HepG2 (cell line): ENCODE measurements at regions of chr16 and their contacts with region 1.

Region 1: DNA sequence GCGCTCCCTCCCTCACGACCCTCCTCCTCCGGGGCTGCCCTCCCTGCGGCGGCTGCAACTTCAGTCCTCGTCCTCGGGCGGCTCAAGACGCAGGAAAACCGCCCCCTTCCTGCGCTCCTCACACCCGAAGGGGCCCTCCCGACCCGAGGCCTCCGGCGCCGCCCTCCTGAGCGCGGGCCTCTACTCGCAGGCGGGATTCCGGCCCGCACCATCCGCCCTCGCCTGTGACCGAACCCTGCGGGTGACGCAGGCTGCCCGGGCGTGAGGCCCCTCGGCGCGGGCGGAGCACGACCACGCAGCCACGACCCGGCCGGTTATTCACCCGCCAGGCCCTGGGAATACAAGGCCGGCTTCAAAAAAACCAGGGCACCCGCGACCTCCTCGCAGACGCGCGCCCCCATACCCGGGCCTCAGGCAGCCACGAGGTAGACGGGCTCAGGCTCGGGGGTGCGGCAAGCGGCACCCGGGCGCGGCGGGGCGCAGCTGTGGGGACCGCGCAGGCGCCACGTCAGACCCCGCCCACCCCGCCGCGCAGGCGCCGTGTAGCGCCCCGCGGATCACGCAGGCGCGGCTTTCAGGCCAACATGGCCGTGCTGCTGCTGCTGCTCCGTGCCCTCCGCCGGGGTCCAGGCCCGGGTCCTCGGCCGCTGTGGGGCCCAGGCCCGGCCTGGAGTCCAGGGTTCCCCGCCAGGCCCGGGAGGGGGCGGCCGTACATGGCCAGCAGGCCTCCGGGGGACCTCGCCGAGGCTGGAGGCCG is at the start of gene SPG7:
- DNase-seq: peak; percentile 75
- ATAC-seq: peak; percentile 70
- H3K4me3 ChIP-seq: peak within 1 kb of the TSS; percentile 75 to 93 (median 83)
- H3K27ac ChIP-seq: peak within 1 kb of the TSS; percentile 88
- H3K4me1 ChIP-seq: peaks cover 57% of the 10 kb centered on the region
- H3K27me3 ChIP-seq: no peaks in the 10 kb centered on the region; a peak in 1 of 5 replicates
- CTCF ChIP-seq: peak; percentile 28; the same call in 1 of the 2 replicates
- EP300 ChIP-seq: 0 out of 4 replicates have a peak, but pooled peaks of 1 of the 2 experiments have one; percentile 18
- POLR2A ChIP-seq: peak; percentile 65 to 94
- RAD21 ChIP-seq: peak; percentile 64
- total RNA-seq, gene SPG7: 63.9 and 136 TPM in 2 replicates

Region 2: DNA sequence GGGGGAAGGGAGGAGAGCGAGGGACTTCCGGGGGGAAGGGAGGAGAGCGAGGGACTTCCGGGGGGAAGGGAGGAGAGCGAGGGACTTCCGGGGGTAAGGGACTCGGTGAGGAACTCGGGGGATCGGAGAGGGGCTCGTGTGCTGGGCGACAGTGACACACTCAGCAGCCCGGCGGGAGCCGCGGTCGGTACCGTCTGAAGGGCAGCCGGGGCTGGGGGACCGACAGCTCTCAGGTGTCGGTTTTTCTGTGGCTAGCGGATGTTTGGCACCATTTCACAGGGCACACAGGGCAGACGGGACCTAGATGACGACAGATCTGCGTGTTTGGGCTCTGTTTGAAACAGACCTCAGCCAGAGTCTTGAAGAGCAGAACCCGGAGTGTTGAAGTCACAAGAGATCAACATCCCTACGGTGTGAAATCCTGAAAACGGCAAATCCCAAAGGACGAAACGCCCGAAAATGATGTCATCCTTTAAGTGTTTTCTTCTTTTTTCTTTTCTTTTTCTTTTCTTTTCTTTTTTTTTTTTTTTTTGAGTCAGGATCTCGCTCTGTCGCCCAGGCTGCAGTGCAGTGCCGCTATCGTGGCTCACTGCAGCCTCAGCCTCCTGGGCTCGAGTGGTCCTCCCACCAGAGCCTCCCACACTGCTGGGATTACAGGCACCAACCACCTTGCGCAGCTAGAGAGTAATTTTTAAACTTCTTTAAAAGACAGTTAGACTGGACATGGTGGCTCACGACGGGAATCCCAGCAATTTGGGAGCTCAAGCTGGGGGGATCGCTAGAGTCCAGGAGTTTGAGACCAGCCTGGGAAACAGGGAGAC is 266.6 kb before region 1 on chr16:
- CTCF ChIA-PET with region 1: no interaction called
- POLR2A ChIA-PET with region 1: interaction called, 9 read pairs
- in situ Hi-C with region 1: no loop called
- intact Hi-C with region 1: loop called (anchors 5 kb)
- DNase-seq: peak; percentile 82
- ATAC-seq: peak; percentile 89
- H3K4me3 ChIP-seq: peak overlapping the region; percentile 66 to 99 (median 90)
- H3K27ac ChIP-seq: peak overlapping the region; percentile 96
- H3K4me1 ChIP-seq: peaks cover 41% of the 10 kb centered on the region
- H3K27me3 ChIP-seq: no peaks in the 10 kb centered on the region; a peak in 1 of 5 replicates
- CTCF ChIP-seq: no peak
- EP300 ChIP-seq: no peak
- POLR2A ChIP-seq: peak; percentile 98
- RAD21 ChIP-seq: peak; percentile 4; the same call in 1 of the 2 replicates

Region 3: DNA sequence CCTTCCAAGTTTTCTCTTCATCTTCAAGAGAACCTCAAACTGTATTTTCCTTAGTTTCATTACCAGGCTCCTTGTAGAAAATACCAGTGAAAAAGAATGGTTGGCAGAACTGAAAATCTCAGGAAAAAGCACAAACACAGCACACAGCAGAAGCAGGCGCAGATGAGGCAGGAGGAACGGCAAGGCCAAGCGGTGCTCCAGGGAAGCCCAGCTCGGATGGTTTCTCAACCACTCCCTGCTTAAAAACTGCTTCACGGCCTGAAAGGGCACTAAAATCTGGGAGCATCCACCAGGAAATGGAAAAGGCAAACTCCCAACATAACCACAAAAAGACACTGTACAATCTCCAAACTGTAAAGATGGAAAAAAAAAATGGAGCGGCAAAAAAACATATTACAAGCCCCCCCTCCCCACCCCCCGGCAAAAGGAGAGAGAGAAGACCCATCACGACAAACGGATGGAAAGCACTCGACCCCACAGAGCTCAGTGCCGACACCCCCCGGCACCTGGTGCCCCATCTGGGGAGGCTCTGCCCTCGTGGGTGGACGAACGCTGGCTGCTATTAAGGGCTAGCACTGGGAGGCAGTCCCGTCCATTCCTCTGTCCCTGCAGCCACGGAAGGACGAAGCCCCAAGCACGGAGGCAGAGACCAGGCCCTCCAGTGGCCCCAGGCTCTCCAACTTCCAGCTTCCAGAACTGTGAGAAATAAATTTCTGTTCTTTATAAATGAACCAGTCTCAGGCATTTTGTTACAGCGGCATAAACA is 163.0 kb before region 1 on chr16:
- CTCF ChIA-PET with region 1: no interaction called
- POLR2A ChIA-PET with region 1: interaction called, 10 read pairs
- in situ Hi-C with region 1: no loop called
- intact Hi-C with region 1: no loop called
- DNase-seq: no peak
- ATAC-seq: peak; percentile 62
- H3K4me3 ChIP-seq: no peak overlapping the region; a peak in 1 of 6 replicates
- H3K27ac ChIP-seq: peak overlapping the region; percentile 50
- H3K4me1 ChIP-seq: peaks cover 55% of the 10 kb centered on the region
- H3K27me3 ChIP-seq: no peaks in the 10 kb centered on the region
- CTCF ChIP-seq: no peak
- EP300 ChIP-seq: no peak
- POLR2A ChIP-seq: no peak
- RAD21 ChIP-seq: no peak

Region 4: DNA sequence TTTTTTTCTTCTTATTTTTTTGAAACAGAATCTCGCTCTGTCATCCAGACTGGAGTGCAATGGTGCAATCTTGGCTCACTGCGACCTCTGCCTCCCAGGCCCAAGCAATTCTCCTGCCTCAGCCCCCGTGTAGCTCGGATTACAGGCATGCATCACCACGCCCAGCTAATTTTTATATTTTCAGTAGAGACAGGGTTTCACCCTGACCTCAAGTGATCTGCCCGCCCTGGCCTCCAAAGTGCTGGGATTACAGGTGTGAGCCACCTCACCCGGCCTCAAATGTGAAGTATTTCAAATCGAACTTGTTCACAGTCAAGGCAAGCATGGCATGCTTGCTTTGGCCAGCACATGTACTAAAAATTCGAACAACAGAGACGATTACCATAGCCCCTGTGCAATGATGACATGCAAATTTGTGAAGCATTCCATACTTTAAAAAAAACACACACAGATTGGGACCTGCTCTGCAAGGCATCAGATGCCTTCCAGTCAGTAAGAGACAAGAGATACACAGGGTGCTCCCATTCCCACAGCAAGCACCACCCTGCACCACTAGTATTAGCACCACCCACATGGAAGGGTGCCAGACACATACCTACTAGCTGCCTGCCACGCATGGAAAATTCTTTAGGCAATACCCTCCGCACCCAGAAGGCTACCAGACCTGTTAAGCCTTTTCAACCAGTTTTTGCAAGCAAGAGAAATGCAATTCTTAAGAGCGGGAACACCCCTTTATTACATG is 64.9 kb before region 1 on chr16:
- CTCF ChIA-PET with region 1: no interaction called
- POLR2A ChIA-PET with region 1: interaction called, 12 read pairs
- in situ Hi-C with region 1: no loop called
- intact Hi-C with region 1: loop called (anchors 5 kb)
- DNase-seq: peak; percentile 89
- ATAC-seq: peak; percentile 77
- H3K4me3 ChIP-seq: peak overlapping the region in 2 of 3 experiments; percentile 1 to 20; a peak in 3 of 6 replicates
- H3K27ac ChIP-seq: peak overlapping the region; percentile 63
- H3K4me1 ChIP-seq: peaks cover 89% of the 10 kb centered on the region
- H3K27me3 ChIP-seq: no peaks in the 10 kb centered on the region
- CTCF ChIP-seq: peak; percentile 53
- EP300 ChIP-seq: no peak
- POLR2A ChIP-seq: no peak
- RAD21 ChIP-seq: no peak

Region 5: DNA sequence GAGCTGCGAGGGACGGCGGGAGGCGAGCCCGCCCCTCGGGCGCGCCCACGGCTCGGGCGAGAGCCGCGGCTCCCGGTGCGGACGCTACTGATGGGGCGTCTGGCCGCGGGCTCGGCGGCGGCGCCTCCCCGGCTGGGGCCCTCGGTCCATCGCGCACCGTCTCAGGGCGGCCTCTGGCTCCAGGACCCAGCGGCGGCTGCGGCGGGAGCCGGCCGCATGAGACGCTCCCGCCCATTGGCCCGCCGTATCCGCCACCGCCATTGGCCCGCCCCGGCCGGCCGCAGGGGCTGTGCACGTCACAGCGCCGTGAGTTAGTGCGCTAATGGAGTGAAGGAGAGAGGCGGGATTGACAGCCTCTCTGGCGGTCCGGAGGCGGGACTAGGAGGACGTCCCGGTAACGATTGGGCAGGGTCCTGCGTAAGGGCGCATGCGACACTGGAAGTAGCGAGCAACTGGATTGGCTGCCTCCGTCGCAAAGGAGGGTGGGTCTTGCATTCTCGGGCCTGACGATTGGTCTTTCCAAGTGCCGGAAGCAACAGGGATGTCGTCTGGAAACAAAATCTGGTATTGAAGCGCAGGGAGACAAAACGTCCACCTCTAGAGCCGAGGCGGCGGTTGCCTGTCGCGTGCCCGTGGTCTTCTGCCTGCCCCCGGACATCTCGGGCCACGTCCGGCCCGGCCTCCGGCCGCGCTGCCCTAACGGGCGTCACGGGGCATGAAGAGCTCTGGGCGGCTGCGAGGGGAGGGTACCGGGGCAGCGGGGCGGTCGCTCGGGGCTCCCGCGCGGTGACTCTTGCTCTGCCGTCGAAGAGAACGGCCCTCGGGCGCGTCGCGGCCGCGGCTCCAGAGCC is 17.4 kb before region 1 on chr16 and contains the start of gene ANKRD11:
- CTCF ChIA-PET with region 1: no interaction called
- POLR2A ChIA-PET with region 1: interaction called, 23 read pairs
- in situ Hi-C with region 1: no loop called
- intact Hi-C with region 1: loop called (anchors 2 kb)
- DNase-seq: peak; percentile 100
- ATAC-seq: peak; percentile 93
- H3K4me3 ChIP-seq: peak within 1 kb of the TSS; percentile 61 to 93 (median 85)
- H3K27ac ChIP-seq: peak within 1 kb of the TSS; percentile 81
- H3K4me1 ChIP-seq: peaks cover 59% of the 10 kb centered on the region
- H3K27me3 ChIP-seq: no peaks in the 10 kb centered on the region; a peak in 1 of 5 replicates
- CTCF ChIP-seq: no peak; the same call in 1 of the 2 replicates
- EP300 ChIP-seq: no peak
- POLR2A ChIP-seq: peak; percentile 91 to 93
- RAD21 ChIP-seq: peak; percentile 88
- total RNA-seq, gene ANKRD11: 21.4 and 24.4 TPM in 2 replicates

Region 6: DNA sequence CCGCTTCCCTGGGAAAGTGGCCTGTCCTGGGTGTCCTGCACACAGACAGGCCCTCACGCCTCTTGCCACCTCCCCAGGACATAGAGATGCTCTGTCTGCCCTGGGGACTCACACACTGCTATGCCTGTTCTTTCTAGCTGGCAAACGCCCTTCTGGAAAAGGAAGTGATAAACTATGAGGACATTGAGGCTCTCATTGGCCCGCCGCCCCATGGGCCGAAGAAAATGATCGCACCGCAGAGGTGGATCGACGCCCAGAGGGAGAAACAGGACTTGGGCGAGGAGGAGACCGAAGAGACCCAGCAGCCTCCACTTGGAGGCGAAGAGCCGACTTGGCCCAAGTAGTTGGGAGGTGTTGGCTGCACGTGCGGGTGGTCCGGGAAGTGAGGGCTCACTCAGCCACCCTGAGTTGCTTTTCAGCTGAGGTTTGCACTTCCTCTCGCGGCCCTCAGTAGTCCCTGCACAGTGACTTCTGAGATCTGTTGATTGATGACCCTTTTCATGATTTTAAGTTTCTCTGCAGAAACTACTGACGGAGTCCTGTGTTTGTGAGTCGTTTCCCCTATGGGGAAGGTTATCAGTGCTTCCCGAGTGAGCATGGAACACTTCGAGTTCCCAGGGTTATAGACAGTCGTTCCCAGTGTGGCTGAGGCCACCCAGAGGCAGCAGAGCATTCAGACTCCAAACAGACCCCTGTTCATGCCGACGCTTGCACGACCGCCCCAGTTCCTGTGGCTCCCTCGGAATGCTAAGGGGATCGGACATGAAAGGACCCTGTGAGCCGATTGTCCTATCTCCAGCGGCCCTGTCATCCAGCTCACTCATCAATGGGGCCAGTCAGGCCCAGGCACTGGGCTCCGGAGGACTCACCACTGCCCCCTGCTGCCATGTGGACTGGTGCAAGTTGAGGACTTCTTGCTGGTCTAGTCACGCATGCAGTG is 49.0 kb after region 1 on chr16:
- CTCF ChIA-PET with region 1: no interaction called
- POLR2A ChIA-PET with region 1: interaction called, 4 read pairs
- in situ Hi-C with region 1: no loop called
- intact Hi-C with region 1: loop called (anchors 5 kb)
- DNase-seq: peak; percentile 90
- ATAC-seq: peak; percentile 79
- H3K4me3 ChIP-seq: no peak overlapping the region
- H3K27ac ChIP-seq: peak overlapping the region; percentile 49
- H3K4me1 ChIP-seq: peaks cover 34% of the 10 kb centered on the region
- H3K27me3 ChIP-seq: no peaks in the 10 kb centered on the region
- CTCF ChIP-seq: peak; percentile 97
- EP300 ChIP-seq: no peak
- POLR2A ChIP-seq: 0 out of 4 replicates have a peak, but pooled peaks of 1 of the 2 experiments have one; percentile 28
- RAD21 ChIP-seq: peak; percentile 91